Heart left ventricle (tissue), 16 donors: ENCODE measurements at regions of chr12 and their contacts with region 1.

Region 1: DNA sequence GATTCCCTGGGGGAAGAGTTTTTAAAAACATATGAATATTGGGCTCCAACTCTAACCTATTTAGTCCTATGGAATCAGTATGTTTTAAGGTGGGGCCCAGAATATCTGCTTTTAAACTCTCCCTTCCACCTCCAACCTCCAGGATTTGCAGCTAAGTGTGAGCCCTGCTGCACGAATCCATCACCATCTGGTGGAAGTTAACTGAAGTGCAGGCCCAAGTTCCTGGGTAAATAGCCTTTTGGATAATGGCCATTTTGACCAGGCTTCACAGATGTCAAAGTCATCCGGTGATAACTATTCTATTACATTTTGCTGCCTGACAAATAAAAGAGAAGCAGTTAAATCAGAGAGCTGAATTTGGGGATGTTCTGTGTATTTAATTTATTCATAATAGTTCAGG is 58.1 kb upstream of the RMST start:
- DNase-seq: no peak
- ATAC-seq: peak in 1 of 4 donors; percentile 56
- H3K4me3 ChIP-seq: no peak overlapping the region
- H3K27ac ChIP-seq: no peak overlapping the region
- H3K4me1 ChIP-seq: no peaks in the 10 kb centered on the region
- H3K27me3 ChIP-seq: no peaks in the 10 kb centered on the region
- CTCF ChIP-seq: peak; percentile 40 to 72 (median 56)
- POLR2A ChIP-seq: no peak

Region 2: GRCh38 chr12:96578526-96579125 is 825.9 kb before region 1 on chr12:
- intact Hi-C with region 1: loop called in 4 of 10 experiments (anchors 10 kb)
- DNase-seq: no peak
- ATAC-seq: peak in 3 of 4 donors; percentile 48 to 63 (median 48)
- H3K4me3 ChIP-seq: no peak overlapping the region
- H3K27ac ChIP-seq: no peak overlapping the region
- H3K4me1 ChIP-seq: no peaks in the 10 kb centered on the region
- H3K27me3 ChIP-seq: no peaks in the 10 kb centered on the region
- CTCF ChIP-seq: peak; percentile 43 to 72 (median 60)
- POLR2A ChIP-seq: no peak

Region 3: DNA sequence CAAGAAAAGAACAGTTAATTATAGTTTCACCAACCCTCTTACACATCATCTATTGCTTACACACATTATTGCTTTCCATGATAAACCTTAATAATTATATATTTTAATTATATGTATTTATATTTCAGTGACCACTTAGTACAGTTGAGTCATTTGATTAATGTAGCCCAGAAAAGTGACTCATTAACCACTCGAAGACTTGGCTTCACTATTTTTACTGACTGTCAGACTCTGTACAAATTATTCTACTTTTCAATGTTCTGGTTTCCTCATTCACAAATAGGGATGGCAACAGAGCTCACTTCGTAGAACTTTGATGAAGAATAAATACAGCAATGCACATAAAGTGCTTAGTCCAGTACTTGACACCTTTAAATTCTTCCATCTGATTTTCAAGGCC is 816.9 kb before region 1 on chr12:
- intact Hi-C with region 1: loop called in 2 of 10 experiments (anchors 10 kb)
- DNase-seq: no peak
- ATAC-seq: no peak
- H3K4me3 ChIP-seq: no peak overlapping the region
- H3K27ac ChIP-seq: no peak overlapping the region
- H3K4me1 ChIP-seq: no peaks in the 10 kb centered on the region
- H3K27me3 ChIP-seq: no peaks in the 10 kb centered on the region
- CTCF ChIP-seq: no peak
- POLR2A ChIP-seq: no peak

Region 4: DNA sequence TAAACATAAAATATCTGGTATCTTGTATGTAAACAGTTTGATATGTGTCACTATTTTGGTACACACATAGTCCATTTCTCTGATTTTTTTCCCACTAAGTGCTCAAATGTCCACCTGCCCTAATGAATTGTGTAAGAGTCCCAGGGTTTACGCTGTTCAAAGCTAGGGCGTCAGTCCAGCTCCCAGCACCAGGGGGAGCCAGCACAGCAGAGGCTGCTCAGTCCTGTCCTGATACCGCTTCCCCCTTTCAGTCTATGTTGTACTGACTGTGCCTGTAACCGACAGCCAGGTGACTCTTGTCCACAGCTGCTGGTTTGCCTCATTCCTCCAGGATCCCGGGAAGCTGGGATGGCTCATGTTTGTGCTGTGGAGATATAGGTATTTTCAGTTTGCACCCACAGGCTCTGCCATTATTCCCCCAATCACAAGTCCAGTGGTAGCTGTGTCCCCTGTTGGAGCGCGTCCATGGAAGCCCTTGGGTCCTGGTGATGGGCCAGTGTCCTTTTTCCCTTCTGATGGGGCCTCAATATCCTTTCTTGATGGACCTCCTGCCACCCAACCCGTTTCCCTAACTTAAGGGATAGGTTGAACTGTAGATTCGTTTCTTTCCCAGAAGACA is 255.5 kb before region 1 on chr12:
- intact Hi-C with region 1: loop called in 1 of 10 experiments (anchors 5 kb)
- DNase-seq: peak; percentile 24 to 64 (median 36)
- ATAC-seq: peak; percentile 77 to 94 (median 91)
- H3K4me3 ChIP-seq: no peak overlapping the region
- H3K27ac ChIP-seq: no peak overlapping the region
- H3K4me1 ChIP-seq: no peaks in the 10 kb centered on the region
- H3K27me3 ChIP-seq: no peaks in the 10 kb centered on the region
- CTCF ChIP-seq: peak; percentile 40 to 79 (median 66)
- POLR2A ChIP-seq: no peak